Endothelial cell of umbilical vein (primary cell): ENCODE measurements at regions of chr3 and their contacts with region 1.

Region 1: GRCh38 chr3:71681224-71681668 is 44.0 kb downstream of the EIF4E3 start:
- DNase-seq: peak; percentile 73
- H3K4me3 ChIP-seq: no peak overlapping the region
- H3K27ac ChIP-seq: no peak overlapping the region
- H3K4me1 ChIP-seq: peaks cover 5% of the 10 kb centered on the region
- H3K27me3 ChIP-seq: no peaks in the 10 kb centered on the region
- CTCF ChIP-seq: peak; percentile 75 to 80
- POLR2A ChIP-seq: no peak

Region 2: GRCh38 chr3:70064194-70064779 is 1617.0 kb before region 1 on chr3:
- CTCF ChIA-PET with region 1: interaction called, 10 read pairs
- POLR2A ChIA-PET with region 1: no interaction called
- dilution Hi-C with region 1: no loop called
- intact Hi-C with region 1: no loop called
- DNase-seq: peak; percentile 71
- H3K4me3 ChIP-seq: no peak overlapping the region
- H3K27ac ChIP-seq: no peak overlapping the region
- H3K4me1 ChIP-seq: no peaks in the 10 kb centered on the region
- H3K27me3 ChIP-seq: peaks cover 10 to 12% of the 10 kb centered on the region in 2 experiments
- CTCF ChIP-seq: peak; percentile 51 to 52
- POLR2A ChIP-seq: no peak

Region 3: DNA sequence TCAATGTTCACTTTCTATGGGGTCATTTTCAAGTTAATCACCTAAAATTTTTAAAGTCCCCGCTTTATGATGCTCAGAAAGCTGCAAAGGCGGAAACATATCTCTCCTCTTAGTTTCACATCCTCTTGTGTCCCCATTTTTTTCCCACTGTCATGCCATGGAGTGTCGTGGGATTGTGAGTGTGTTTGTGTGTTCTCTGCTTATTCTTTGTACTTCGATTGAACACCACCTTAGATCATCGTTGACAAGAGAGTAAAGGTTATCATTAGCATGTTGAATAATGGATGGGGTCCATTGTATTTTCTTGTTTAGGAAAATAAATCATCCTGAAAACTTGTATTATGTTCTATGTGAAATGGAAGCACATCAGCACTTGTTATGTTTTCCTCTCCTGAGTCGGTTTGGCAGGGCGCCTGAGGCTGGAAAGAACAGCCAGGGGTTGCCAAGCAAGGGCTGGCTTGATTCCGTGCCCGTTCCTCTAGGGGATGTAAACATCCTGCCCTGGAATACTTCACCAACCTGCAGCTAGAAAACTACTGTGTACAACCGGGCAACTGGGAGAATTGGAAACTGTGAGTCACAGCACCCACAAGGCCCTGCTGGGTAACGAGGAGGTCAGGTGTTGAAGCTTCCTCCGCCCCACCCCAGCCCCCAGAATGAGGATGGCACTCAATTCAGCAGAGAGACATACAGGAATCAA is 23.3 kb before region 1 on chr3:
- CTCF ChIA-PET with region 1: interaction called, 28 read pairs
- POLR2A ChIA-PET with region 1: no interaction called
- dilution Hi-C with region 1: no loop called
- intact Hi-C with region 1: no loop called
- DNase-seq: peak; percentile 99
- H3K4me3 ChIP-seq: no peak overlapping the region
- H3K27ac ChIP-seq: peak overlapping the region; percentile 32
- H3K4me1 ChIP-seq: peaks cover 18% of the 10 kb centered on the region
- H3K27me3 ChIP-seq: peaks cover 0 to 2% of the 10 kb centered on the region in 2 experiments
- CTCF ChIP-seq: no peak
- POLR2A ChIP-seq: no peak

Region 4: GRCh38 chr3:71694358-71694999 is 13.2 kb after region 1 on chr3:
- CTCF ChIA-PET with region 1: interaction called, 15 read pairs
- POLR2A ChIA-PET with region 1: no interaction called
- dilution Hi-C with region 1: no loop called
- intact Hi-C with region 1: no loop called
- DNase-seq: peak; percentile 66
- H3K4me3 ChIP-seq: no peak overlapping the region
- H3K27ac ChIP-seq: peak overlapping the region; percentile 37
- H3K4me1 ChIP-seq: peaks cover 15% of the 10 kb centered on the region
- H3K27me3 ChIP-seq: peaks cover 0 to 2% of the 10 kb centered on the region in 2 experiments
- CTCF ChIP-seq: no peak
- POLR2A ChIP-seq: no peak

Region 5: DNA sequence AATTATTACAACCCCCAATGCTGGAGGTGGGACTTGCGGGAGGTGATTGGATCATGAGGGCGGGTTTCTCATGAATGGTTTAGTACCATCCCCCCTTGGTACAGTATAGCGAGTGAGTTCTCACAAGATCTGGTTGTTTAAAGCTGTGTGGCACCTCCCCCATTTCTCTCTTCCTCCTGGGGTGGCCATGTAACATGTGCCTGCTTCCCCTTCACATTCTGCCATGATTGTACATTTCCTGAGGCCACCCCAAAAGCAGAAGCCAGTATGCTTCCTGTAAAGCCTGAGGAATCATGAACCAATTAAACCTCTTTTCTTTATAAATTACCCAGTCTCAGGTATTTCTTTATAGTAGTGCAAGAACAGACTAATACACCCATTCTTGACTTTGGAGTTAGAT is 124.0 kb after region 1 on chr3:
- CTCF ChIA-PET with region 1: no interaction called
- POLR2A ChIA-PET with region 1: no interaction called
- dilution Hi-C with region 1: no loop called
- intact Hi-C with region 1: no loop called
- DNase-seq: no peak
- H3K4me3 ChIP-seq: no peak overlapping the region
- H3K27ac ChIP-seq: no peak overlapping the region
- H3K4me1 ChIP-seq: no peaks in the 10 kb centered on the region
- H3K27me3 ChIP-seq: no peaks in the 10 kb centered on the region
- CTCF ChIP-seq: no peak
- POLR2A ChIP-seq: no peak